ENCODE measurements at regions of chr10 and their contacts with region 1.

Region 1: DNA sequence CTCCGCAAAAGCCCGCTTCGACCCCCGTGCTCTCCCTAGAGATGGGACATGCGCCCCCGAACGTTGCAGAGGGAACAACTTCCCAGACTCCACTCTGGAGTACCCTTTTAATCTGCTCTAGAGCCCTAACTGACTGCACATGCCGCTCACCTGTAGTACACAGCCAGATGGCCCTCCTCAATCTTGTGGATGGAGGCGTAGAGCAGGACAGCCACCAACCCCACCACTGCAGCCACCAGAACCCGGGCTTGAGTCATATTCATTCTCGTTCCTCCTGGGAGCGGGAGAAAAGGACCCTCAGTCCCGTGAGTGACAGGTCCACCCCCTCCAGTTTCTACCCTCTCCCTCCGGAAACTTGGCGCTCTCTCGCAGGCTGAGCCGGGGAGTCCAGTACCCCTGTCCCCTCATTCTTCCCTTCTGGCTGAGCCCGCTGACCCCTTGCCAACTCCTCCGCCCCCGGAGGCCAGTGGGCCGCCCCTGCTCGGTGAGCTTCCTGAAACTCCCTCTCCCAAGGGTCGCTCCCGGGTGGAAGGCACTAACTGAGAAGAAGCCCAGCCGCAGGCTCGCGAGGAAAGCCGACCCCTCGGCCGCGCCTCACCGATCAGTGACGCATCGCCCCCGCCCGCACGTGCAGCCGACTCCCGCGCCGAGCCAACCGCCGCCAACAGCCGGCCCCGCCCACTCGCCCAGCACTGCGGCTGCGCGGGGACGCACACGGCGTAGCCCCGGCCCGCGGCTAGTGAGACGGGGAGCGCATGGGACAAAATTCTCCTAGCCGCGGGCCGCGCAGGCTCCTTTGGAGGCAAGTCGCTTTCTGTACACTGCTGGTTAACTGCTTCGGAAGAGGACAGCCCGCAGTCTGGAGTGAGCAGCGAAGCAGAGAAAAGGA is at the start of gene ERLIN1:
- DNase-seq: peak; percentile 96
- total RNA-seq, gene ERLIN1: 7.2 TPM

Region 2: DNA sequence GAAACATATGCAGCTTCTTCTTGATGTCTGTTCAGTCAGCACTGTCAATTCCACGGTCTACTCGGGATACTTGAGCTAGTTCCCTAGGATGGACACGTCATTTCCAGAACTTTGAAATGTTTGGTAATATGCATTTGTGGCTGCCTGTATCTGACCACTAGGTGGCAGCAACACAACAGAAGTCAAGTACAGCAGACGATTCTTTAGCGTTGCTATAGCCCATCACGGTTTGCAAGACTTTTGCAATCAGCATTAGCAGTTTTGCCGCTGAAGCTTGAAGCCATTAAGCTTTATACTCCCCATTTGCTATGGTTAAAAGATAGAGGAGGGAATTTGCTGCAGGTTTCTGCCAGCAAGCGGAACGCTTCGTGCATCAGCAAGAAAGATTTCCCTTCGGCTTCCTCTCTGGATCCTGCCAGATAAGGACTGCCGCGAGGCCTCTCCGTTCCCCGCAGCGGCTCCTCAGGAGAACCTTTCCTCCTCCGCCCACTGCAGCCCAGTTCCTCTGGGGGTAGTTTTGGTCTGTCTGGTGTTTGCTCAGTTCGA is 339.7 kb before region 1 on chr10:
- intact Hi-C with region 1: loop called (anchors 5 kb)
- DNase-seq: no peak

Region 3: GRCh38 chr10:100229819-100230422 is 44.3 kb after region 1 on chr10:
- intact Hi-C with region 1: loop called (anchors 5 kb)
- DNase-seq: no peak

Region 4: GRCh38 chr10:100245484-100246220 is 60.0 kb after region 1 on chr10:
- intact Hi-C with region 1: no loop called
- DNase-seq: no peak

Region 5: DNA sequence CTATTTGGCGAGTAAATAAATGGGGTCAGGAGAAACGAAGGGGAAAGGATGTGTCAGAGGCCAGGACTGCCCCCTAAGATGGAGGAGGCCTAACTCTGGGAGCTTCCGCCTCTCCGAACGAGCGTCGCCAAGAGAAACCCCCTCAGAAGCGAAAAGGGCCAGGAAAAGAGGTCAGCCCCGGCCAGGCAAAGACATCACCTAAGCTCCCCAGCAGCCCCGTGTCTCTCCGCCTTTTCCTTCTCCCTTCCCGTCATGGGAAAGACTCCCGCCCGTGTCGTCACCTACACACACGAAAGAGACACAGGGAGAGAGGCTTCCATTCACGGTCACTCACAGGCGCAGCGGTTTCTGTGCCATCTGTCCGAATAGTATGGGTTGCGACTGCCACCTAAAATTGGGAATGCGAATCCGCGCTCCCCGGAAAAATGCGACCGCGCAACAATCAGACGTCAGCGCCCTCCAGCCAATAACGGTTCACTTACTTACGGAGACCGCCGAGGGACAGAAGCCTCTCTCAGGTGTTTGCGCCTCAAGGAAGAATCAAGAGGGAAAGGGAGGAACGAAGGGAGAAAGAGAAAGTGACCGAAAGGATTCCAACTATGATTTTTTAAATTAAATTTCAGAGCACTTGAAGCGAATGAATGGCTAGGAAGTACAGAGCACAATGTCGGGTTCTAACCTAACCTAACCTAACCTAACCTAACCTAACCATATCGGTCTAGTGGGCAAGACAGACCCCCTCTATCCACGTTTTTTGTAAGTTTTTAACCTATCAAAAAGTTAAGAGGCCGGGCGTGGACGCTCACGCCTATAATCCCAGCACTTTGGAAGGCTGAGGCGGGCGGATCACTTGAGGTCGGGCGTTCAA is 81.9 kb after region 1 on chr10 and contains the start of gene CWF19L1:
- intact Hi-C with region 1: loop called (anchors 5 kb)
- DNase-seq: peak; percentile 94
- total RNA-seq, gene CWF19L1: 15.9 TPM